ENCODE measurements at regions of chr17 and their contacts with region 1.

Region 1: GRCh38 chr17:44186307-44187130 is at the start of gene TMUB2:
- DNase-seq: peak; percentile 99
- H3K4me3 Mint-ChIP-seq: peak within 1 kb of the TSS; percentile 100
- H3K27ac Mint-ChIP-seq: peak within 1 kb of the TSS; percentile 99
- H3K4me1 Mint-ChIP-seq: peaks cover 44% of the 10 kb centered on the region
- H3K27me3 Mint-ChIP-seq: no peaks in the 10 kb centered on the region
- total RNA-seq, gene TMUB2: 36.6 to 37.1 TPM

Region 2: DNA sequence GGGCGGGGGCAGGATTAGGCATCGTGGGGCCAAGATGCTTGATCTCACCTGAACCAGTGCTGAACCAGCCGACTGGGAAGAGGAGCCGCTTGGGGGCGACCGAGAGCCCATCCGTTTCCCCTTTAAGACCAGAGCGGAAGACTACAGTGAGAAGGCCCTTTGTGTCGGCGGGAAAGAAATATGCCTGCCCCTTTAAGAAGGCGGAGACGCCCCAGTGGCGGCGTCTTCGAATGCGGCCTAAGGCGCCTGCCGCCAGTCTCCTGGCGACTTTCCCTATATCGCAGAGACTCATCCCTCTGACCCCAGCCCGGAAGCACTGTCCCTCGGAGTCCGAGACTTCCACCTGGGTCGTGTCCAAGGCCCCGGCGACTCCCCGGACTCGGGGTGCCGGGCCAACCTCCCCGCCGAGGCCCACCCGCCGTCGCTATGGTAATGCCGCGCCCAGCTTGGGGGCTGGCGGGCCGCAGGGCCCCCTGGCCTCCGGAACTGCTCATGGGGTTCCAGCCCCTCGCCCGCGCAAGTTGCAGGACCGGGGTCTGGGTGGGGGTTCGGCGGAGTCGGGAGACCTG is 44.7 kb before region 1 on chr17 and contains the start of gene HROB:
- CTCF ChIA-PET with region 1: interaction called, 11 read pairs
- POLR2A ChIA-PET with region 1: no interaction called
- DNase-seq: peak; percentile 99
- H3K4me3 Mint-ChIP-seq: peak within 1 kb of the TSS; percentile 89
- H3K27ac Mint-ChIP-seq: peak within 1 kb of the TSS; percentile 93
- H3K4me1 Mint-ChIP-seq: peaks cover 29% of the 10 kb centered on the region
- H3K27me3 Mint-ChIP-seq: no peaks in the 10 kb centered on the region
- total RNA-seq, gene HROB: 15.1 to 16.4 TPM

Region 3: DNA sequence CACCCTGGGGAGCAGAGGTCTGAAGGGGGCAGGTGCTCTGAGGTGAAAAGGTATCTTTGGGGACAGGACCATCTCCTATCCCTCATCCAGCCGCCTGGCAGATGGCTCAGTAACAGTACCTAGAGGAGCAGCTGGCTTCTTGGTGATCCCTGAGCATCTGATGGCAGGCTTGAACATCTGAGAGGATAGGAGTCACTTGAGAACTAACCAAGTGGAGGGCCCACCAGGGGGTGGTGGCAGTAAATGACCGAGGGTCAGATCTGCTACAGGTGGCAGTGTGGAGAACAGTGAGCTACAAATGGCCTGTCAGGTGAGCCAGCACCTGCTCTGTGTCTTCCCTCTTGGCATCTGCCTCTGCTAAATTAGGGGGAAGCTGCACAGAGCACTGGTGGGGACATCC is 31.0 kb before region 1 on chr17:
- CTCF ChIA-PET with region 1: no interaction called
- POLR2A ChIA-PET with region 1: no interaction called
- DNase-seq: no peak
- H3K4me3 Mint-ChIP-seq: no peak overlapping the region
- H3K27ac Mint-ChIP-seq: peak overlapping the region; percentile 19
- H3K4me1 Mint-ChIP-seq: peaks cover 18% of the 10 kb centered on the region
- H3K27me3 Mint-ChIP-seq: no peaks in the 10 kb centered on the region

Region 4: GRCh38 chr17:44167181-44167861 is 19.2 kb before region 1 on chr17:
- CTCF ChIA-PET with region 1: interaction called, 11 read pairs
- POLR2A ChIA-PET with region 1: no interaction called
- DNase-seq: no peak
- H3K4me3 Mint-ChIP-seq: no peak overlapping the region
- H3K27ac Mint-ChIP-seq: no peak overlapping the region
- H3K4me1 Mint-ChIP-seq: peaks cover 12% of the 10 kb centered on the region
- H3K27me3 Mint-ChIP-seq: no peaks in the 10 kb centered on the region

Measured in activated CD4-positive, alpha-beta T cell treated with anti-CD3 and anti-CD28 coated beads, Interleukin-2, amount 10 ng/mL, durations not matched to agents 7 days and 5 days (primary cell).